Uterus (tissue), 4 donors: ENCODE measurements at regions of chr15 and their contacts with region 1.

Region 1: DNA sequence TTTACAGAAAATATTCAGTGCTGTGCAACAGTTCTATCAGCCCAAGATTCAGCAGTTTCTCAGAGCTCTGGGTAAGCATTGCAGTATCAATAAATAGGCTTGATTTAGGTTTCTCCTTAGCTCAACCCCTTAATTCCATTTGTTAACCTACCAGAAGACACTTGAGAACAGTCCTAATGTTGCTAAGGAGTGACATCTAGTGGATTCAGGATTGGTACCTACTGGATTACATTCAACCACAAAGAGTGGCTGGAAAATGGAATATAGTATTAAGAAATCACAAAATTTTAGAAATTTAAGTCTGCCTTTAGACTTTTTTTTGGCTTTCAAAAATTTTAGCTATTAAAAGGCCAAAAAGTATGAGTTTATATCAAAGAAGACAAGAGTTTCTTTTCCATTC is 34.7 kb downstream of the POLG start:
- DNase-seq: no peak
- H3K4me3 ChIP-seq: no peak overlapping the region
- H3K27ac ChIP-seq: no peak overlapping the region
- H3K4me1 ChIP-seq: no peaks in the 10 kb centered on the region
- H3K27me3 ChIP-seq: no peaks in the 10 kb centered on the region
- CTCF ChIP-seq: no peak
- POLR2A ChIP-seq: no peak

Region 2: GRCh38 chr15:89888214-89888804 is 588.4 kb after region 1 on chr15:
- intact Hi-C with region 1: loop called (anchors 10 kb)
- DNase-seq: no peak
- H3K4me3 ChIP-seq: no peak overlapping the region
- H3K27ac ChIP-seq: no peak overlapping the region
- H3K4me1 ChIP-seq: peaks cover 0 to 8% of the 10 kb centered on the region in 2 donors
- H3K27me3 ChIP-seq: no peaks in the 10 kb centered on the region
- CTCF ChIP-seq: no peak
- POLR2A ChIP-seq: no peak